ENCODE measurements at regions of chr5 and their contacts with region 1.

Region 1: DNA sequence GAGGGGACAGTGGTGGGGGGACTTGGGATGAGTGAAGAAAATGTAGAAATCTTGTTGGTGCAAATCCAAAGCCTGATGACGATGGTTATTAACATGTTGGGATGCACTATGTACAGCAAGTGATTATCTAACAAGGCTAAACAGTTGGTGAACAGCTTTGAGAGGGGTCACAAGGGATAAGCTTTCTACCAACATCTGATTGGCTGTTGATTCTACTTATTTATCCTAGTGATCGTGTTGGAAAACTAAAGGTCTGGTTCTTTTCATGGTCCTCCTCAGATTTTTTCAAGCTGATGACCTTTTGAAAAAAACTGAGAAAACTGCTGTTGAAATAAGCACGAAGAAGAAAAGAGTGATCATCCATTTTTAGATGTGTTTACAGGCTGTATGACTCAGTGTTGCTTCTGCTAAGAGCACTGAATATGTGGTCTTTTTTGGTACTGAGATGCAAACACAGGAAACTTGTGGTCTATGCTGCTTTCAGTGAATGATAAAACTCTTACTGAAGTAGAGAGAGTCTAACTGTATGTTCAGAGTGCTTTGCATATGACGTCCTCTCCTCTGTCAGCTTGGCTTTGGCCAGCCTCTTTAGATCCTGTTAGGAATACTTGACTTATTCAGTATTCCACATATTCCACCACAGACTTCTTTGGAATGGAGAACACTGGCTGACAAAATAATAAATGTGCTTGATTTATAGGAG is 174.8 kb downstream of the SLF1 start:
- DNase-seq: peak; percentile 92
- ATAC-seq: peak; percentile 98
- H3K4me3 ChIP-seq: 0 out of 2 replicates have a peak overlapping the region, but pooled peaks have one; percentile 4
- H3K27ac ChIP-seq: peak overlapping the region; percentile 74
- H3K4me1 ChIP-seq: peaks cover 34% of the 10 kb centered on the region
- H3K27me3 ChIP-seq: no peaks in the 10 kb centered on the region
- CTCF ChIP-seq: no peak
- EP300 ChIP-seq: peak; percentile 94 to 96
- POLR2A ChIP-seq: no peak
- RAD21 ChIP-seq: no peak

Region 2: DNA sequence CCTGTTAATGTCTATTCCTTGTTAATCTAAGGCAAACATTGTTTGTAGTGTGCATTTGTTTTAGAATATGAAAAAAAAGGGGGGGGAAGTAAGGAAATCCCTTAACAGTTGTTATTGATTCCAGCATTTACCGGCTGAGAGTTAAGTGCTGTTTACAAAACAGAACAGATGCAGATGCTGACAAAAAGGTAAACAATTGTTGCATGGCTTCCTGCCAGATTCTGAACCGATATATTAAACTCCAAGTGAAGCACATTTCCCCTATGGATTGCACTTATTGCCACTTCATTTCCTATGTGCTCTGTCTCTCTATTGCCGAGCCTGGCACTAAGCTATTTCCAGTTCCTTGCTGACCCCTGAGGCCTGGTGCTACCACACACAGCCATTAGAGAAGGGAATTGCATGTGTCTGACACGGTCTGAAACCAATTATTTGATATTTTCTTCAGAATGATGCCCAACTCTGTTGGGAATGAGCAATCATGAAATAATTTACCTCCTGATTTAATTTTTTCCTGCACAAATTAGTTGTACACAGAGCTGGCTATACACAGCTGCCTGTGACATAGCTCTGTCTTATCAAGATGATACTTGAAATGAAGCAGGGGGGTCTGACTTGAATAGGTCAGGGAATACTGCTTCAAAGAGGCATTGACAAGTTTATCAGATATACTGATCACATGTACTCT is 284.7 kb before region 1 on chr5:
- CTCF ChIA-PET with region 1: no interaction called
- POLR2A ChIA-PET with region 1: no interaction called
- RAD21 ChIA-PET with region 1: no interaction called
- SMC1A ChIA-PET with region 1: no interaction called
- in situ Hi-C with region 1: no loop called
- intact Hi-C with region 1: no loop called
- DNase-seq: no peak
- ATAC-seq: no peak
- H3K4me3 ChIP-seq: no peak overlapping the region
- H3K27ac ChIP-seq: no peak overlapping the region
- H3K4me1 ChIP-seq: no peaks in the 10 kb centered on the region
- H3K27me3 ChIP-seq: no peaks in the 10 kb centered on the region
- CTCF ChIP-seq: no peak
- EP300 ChIP-seq: no peak
- POLR2A ChIP-seq: no peak
- RAD21 ChIP-seq: no peak

Region 3: DNA sequence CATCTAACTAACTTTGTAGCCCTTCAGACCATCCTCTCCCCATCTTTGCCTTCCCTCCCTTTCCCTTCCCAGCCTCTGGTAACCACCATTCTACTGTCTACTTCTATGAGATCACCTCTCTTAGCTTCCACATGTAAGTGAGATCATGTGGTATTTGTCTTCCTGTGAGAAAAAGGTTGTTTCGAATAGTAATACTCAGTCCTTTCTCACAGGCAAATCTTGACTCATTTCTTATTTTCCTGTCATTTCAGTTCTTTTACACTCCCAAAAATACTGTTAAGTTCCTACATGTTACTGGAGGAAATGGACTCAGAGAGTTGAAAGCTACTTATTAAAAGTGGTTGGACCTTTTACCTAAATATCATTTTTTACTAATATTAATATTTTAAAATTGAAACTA is 92.7 kb before region 1 on chr5:
- CTCF ChIA-PET with region 1: no interaction called
- POLR2A ChIA-PET with region 1: no interaction called
- RAD21 ChIA-PET with region 1: interaction called, 12 read pairs
- SMC1A ChIA-PET with region 1: interaction called, 10 read pairs
- in situ Hi-C with region 1: no loop called
- intact Hi-C with region 1: loop called (anchors 5 kb)
- DNase-seq: peak; percentile 33
- ATAC-seq: peak; percentile 82
- H3K4me3 ChIP-seq: no peak overlapping the region
- H3K27ac ChIP-seq: peak overlapping the region; percentile 18; the same call in 1 of the 2 replicates
- H3K4me1 ChIP-seq: peaks cover 19% of the 10 kb centered on the region; the same call in 1 of the 2 replicates
- H3K27me3 ChIP-seq: no peaks in the 10 kb centered on the region
- CTCF ChIP-seq: no peak
- EP300 ChIP-seq: peak in 1 of 2 experiments; percentile 48; a peak in 2 of 4 replicates
- POLR2A ChIP-seq: no peak
- RAD21 ChIP-seq: no peak

Region 4: DNA sequence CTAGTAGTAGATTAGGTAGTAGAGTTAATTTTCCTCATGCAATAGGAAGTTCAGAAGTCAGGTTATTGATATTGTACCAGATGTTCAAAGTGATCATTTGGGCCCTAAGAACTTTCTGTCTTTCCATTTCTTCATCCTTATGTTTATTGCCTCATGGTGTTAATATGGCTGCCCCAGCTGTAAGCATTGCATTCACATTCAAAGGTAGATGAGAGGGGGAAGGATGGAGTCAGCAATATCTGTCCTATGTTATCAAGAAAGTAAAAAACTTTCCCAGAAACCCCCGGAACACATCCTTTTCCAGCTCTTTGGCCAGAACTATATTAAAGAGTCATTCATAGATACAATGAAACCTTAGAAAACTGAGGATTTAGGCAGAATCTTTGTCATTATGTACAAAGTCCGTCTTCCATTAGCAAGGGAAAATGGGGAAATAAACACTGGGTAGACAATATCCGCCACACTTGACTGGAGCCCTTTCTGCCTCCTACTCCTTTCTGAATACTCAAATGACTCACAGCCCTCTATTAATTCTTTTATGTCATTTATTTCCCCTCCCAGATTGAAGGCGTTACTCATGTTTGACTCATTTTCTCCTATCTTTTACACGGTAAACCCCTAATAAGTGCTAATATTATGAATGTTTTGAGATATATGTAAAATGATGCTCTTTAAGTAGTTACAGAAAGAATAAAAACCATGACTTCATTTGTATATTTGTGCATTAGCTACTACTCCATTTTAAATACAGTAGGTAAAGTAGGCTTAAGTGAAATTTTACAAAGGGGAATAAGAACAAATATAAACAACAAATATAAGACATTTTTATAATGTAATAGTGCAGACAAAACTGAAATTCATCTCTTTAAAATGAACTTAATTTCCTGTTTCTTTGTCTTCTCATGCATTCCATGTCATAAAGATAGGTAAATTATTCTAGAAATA is 47.2 kb before region 1 on chr5:
- CTCF ChIA-PET with region 1: interaction called, 6 read pairs
- POLR2A ChIA-PET with region 1: interaction called, 5 read pairs
- RAD21 ChIA-PET with region 1: interaction called, 10 read pairs
- SMC1A ChIA-PET with region 1: interaction called, 30 read pairs
- in situ Hi-C with region 1: no loop called
- intact Hi-C with region 1: loop called (anchors 2 kb)
- DNase-seq: peak; percentile 56
- ATAC-seq: peak; percentile 83
- H3K4me3 ChIP-seq: no peak overlapping the region
- H3K27ac ChIP-seq: peak overlapping the region; percentile 70
- H3K4me1 ChIP-seq: peaks cover 29% of the 10 kb centered on the region
- H3K27me3 ChIP-seq: no peaks in the 10 kb centered on the region
- CTCF ChIP-seq: no peak
- EP300 ChIP-seq: peak; percentile 88 to 96
- POLR2A ChIP-seq: no peak
- RAD21 ChIP-seq: no peak

Region 5: DNA sequence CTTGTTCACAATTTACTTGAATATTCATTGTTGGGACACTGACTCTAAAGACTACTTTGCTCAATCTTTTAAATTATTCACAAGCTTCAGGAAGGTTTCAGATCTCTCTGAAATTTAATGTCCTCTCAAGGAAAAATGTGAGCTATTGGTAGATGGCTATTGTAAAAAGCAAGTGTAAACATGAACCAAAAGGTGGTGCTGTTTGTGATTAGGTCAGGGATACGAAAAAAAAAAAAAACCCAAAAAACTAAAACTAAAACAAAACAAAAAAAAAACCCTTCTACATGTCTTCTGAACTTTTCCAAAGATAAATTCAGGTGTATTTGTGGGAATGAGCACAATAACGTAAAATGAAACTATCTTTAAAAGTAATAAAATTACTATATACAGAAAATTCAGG is 19.0 kb after region 1 on chr5:
- CTCF ChIA-PET with region 1: interaction called, 15 read pairs
- POLR2A ChIA-PET with region 1: interaction called, 7 read pairs
- RAD21 ChIA-PET with region 1: interaction called, 3 read pairs
- SMC1A ChIA-PET with region 1: interaction called, 5 read pairs
- in situ Hi-C with region 1: no loop called
- intact Hi-C with region 1: no loop called
- DNase-seq: no peak
- ATAC-seq: no peak
- H3K4me3 ChIP-seq: no peak overlapping the region
- H3K27ac ChIP-seq: no peak overlapping the region
- H3K4me1 ChIP-seq: no peaks in the 10 kb centered on the region
- H3K27me3 ChIP-seq: no peaks in the 10 kb centered on the region
- CTCF ChIP-seq: no peak; a peak in 1 of 6 replicates
- EP300 ChIP-seq: no peak
- POLR2A ChIP-seq: no peak
- RAD21 ChIP-seq: no peak

Region 6: DNA sequence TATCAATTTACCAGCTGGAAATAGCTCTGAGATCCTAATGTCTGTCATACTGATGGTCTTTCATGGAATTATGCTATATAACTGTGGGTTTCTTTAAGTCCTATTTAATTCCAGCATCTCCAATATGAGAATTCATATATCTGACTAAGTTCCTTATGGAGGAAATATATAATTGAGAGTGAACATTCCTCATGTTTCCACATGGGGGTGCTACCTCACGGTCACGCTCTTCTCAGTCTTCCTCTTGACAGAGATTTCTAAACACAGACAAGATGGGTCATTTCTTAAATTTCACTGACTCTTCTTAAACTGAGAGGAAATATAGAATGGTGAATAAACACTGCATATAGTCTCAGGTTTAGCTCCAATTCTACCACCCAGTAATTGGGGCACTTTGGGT is 37.3 kb after region 1 on chr5:
- CTCF ChIA-PET with region 1: no interaction called
- POLR2A ChIA-PET with region 1: no interaction called
- RAD21 ChIA-PET with region 1: no interaction called
- SMC1A ChIA-PET with region 1: interaction called, 11 read pairs
- in situ Hi-C with region 1: no loop called
- intact Hi-C with region 1: no loop called
- DNase-seq: no peak
- ATAC-seq: peak; percentile 68
- H3K4me3 ChIP-seq: no peak overlapping the region
- H3K27ac ChIP-seq: no peak overlapping the region
- H3K4me1 ChIP-seq: no peaks in the 10 kb centered on the region
- H3K27me3 ChIP-seq: no peaks in the 10 kb centered on the region
- CTCF ChIP-seq: peak; percentile 23 to 42 (median 32); a peak in 5 of 6 replicates
- EP300 ChIP-seq: no peak
- POLR2A ChIP-seq: no peak
- RAD21 ChIP-seq: peak; percentile 26; the same call in 1 of the 2 replicates